MCF 10A (cell line): ENCODE measurements at regions of chr14 and their contacts with region 1.

Region 1: GRCh38 chr14:54683882-54684794 is 117.2 kb downstream of the SAMD4A start:
- DNase-seq: peak; percentile 78
- H3K4me3 Mint-ChIP-seq: peak overlapping the region; percentile 36
- H3K27ac Mint-ChIP-seq: peak overlapping the region; percentile 89
- H3K4me1 Mint-ChIP-seq: peaks cover 55% of the 10 kb centered on the region
- H3K27me3 Mint-ChIP-seq: no peaks in the 10 kb centered on the region
- CTCF ChIP-seq: no peak

Region 2: DNA sequence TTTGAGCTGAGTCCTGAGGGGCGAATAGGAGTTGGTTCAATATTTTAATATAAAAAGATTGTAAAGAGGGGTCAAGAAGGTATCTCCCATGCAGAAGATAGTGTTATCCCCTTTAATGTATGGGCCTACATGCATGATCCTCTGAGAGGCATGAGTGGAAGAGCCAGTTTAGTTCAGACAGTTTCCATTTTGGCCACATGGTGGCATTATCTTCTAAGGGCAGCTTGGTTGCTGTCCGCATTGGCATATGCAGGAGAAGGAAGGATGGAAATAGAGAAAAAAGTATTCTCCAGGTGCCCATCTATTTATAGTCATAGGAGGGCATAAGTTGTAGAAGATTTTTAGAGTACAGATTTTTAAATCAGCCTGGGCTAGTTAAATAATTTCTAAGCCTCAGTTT is 111.8 kb before region 1 on chr14:
- CTCF ChIA-PET with region 1: interaction called, 97 read pairs
- POLR2A ChIA-PET with region 1: interaction called, 95 read pairs
- intact Hi-C with region 1: no loop called
- DNase-seq: peak; percentile 60
- H3K4me3 Mint-ChIP-seq: no peak overlapping the region
- H3K27ac Mint-ChIP-seq: peak overlapping the region; percentile 67
- H3K4me1 Mint-ChIP-seq: peaks cover 28% of the 10 kb centered on the region
- H3K27me3 Mint-ChIP-seq: no peaks in the 10 kb centered on the region
- CTCF ChIP-seq: peak; percentile 43

Region 3: GRCh38 chr14:54805521-54806322 is 121.6 kb after region 1 on chr14:
- CTCF ChIA-PET with region 1: no interaction called
- POLR2A ChIA-PET with region 1: no interaction called
- intact Hi-C with region 1: no loop called
- DNase-seq: peak; percentile 86
- H3K4me3 Mint-ChIP-seq: no peak overlapping the region
- H3K27ac Mint-ChIP-seq: no peak overlapping the region
- H3K4me1 Mint-ChIP-seq: peaks cover 12% of the 10 kb centered on the region
- H3K27me3 Mint-ChIP-seq: peaks cover under 1% of the 10 kb centered on the region
- CTCF ChIP-seq: peak; percentile 91